Uterus (tissue), 4 donors: ENCODE measurements at regions of chr1 and their contacts with region 1.

Region 1: DNA sequence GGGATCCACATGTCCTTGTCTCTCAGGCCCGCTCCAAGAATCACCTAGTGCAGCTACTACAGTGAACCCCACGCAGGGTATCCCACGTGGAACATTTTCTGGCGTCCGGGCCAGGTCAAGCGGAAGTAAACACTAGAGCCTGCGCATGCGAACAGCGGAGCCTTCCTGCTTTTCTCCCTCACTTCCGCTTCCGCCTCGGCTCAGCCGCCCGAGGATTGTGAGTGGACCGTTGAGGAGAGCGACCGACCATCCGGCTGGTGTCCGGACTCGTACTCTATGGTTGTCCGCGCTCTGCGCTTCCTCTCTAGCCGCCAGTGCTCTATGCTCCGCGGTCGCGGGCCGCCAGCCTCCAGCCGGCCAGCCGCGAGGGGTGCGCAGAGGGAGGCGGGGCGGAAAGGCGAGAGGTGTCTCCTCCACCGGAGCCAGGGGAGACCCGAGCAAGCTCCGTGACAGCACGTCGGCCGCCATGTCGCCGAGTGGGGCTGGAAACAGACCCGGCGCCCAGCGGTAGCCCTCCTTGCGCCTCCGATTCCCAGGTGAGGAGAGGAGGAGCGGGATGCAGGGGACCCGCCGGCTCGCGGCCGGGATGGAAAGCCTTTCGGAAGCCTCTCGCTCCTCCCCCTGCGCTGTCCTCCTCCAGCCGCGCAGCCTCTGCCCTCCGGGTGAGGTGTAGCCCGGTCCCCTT is at the starts of genes CNST and TFB2M:
- DNase-seq: peak; percentile 96 to 98
- H3K4me3 ChIP-seq: peak within 1 kb of the TSS; percentile 66 to 75
- H3K27ac ChIP-seq: peak within 1 kb of the TSS; percentile 91 to 92
- H3K4me1 ChIP-seq: peaks cover 0 to 13% of the 10 kb centered on the region in 2 donors
- H3K27me3 ChIP-seq: no peaks in the 10 kb centered on the region
- CTCF ChIP-seq: peak in 2 of 4 experiments; percentile 19 to 25
- POLR2A ChIP-seq: peak; percentile 91 to 94
- total RNA-seq, gene CNST: 19.7 to 31.0 (median 29.2) TPM
- total RNA-seq, gene TFB2M: 3.5 to 25.0 (median 8.8) TPM

Region 2: GRCh38 chr1:246699095-246699735 is 132.9 kb after region 1 on chr1:
- intact Hi-C with region 1: loop called (anchors 10 kb)
- DNase-seq: peak; percentile 81 to 90
- H3K4me3 ChIP-seq: peak overlapping the region; percentile 15 to 28
- H3K27ac ChIP-seq: peak overlapping the region; percentile 52 to 69
- H3K4me1 ChIP-seq: no peaks in the 10 kb centered on the region
- H3K27me3 ChIP-seq: no peaks in the 10 kb centered on the region
- CTCF ChIP-seq: peak; percentile 77 to 85 (median 81)
- POLR2A ChIP-seq: no peak